Right lobe of liver (tissue), 6 donors: ENCODE measurements at regions of chr3 and their contacts with region 1.

Region 1: GRCh38 chr3:129824926-129825541 is 68.5 kb downstream of the TMCC1 start:
- DNase-seq: peak in 1 of 3 donors; percentile 53
- ATAC-seq: peak; percentile 71 to 81 (median 78)
- H3K4me3 ChIP-seq: no peak overlapping the region
- H3K27ac ChIP-seq: no peak overlapping the region
- H3K4me1 ChIP-seq: peaks cover 0 to 13% (median 6%) of the 10 kb centered on the region in 4 donors
- H3K27me3 ChIP-seq: no peaks in the 10 kb centered on the region
- CTCF ChIP-seq: peak; percentile 74 to 80 (median 76)
- POLR2A ChIP-seq: no peak

Region 2: DNA sequence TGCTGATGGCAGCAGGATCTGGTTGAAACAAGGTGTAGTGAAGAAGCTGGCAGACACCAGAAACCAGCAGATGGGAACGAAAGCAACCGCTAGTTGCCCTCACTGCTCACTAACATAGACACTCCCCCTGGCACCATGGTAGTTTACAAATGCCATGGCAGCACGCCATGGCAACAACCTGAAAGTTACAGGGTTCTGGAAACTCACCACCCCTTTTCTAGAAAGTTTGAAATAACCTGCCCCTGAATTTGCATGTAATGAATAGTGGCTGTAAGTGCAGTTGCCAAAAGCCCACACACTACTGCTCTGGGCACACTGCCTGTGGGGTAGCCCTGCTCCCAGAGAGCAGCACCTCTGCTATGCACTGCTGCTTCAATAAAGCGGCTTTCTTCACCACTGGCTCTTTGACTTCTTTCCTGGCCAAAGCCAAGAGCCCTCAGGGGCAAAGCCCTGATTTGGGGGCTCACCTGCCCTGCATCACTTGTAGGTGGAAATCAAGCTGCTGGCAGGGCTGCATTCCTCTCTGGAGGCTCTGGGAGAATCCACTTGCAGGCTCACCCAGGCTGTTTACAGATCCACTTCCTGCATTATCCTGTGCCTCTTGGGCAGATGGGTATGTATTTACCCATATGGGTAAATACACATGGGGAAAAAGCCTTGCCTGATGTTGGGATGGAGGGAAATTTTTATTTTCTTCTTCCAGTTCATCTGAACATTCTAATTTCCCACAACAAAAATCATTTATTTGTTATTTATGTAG is 766.4 kb before region 1 on chr3:
- intact Hi-C with region 1: no loop called
- DNase-seq: peak; percentile 67 to 80 (median 78)
- ATAC-seq: peak; percentile 81 to 87 (median 84)
- H3K4me3 ChIP-seq: no peak overlapping the region
- H3K27ac ChIP-seq: peak overlapping the region in 2 of 3 donors; percentile 58 to 68
- H3K4me1 ChIP-seq: peaks cover 0 to 10% (median 3%) of the 10 kb centered on the region in 4 donors
- H3K27me3 ChIP-seq: no peaks in the 10 kb centered on the region
- CTCF ChIP-seq: peak in 2 of 4 donors; percentile 22 to 25
- POLR2A ChIP-seq: no peak

Region 3: DNA sequence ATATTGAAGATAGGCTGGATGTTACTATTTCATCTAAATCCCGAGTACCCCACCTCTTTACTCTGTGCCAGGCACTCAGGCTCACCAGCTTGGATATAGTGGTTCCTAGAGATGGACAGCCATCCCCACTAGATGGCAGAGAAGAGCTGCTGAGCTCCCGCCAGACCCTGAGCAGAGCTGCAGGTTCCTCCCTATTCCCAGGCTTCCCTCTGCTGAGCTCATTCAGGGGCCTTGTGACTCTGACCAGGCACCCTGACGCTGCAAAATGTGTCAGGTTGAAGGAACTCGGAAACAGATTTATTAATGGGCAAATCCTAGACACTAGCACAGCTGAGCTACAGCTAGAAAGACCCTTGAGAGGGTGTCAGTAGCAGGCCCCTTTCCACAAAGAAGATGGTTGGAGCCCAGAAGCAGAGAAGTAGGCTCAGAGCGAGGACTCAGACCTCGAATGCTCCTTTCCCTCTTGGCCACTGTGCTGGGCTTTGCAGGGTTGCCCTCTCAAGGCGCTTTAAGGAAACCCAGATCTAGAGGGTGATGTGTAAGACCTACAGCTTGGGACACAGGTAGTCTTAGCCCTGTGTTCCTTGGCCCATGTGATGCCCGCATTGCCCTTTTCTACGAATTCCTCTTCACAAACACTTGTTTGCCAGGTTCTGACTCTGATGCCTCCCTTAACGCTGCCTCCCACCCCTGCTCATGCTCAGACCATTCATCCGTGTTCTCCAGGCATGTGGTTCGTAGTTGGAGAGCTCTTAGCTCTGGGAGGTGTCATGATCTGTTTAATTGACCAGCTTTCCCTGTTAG is 334.6 kb before region 1 on chr3:
- intact Hi-C with region 1: loop called in 1 of 2 experiments (anchors 10 kb)
- DNase-seq: peak; percentile 82 to 83 (median 83)
- ATAC-seq: peak; percentile 91 to 94 (median 93)
- H3K4me3 ChIP-seq: no peak overlapping the region
- H3K27ac ChIP-seq: peak overlapping the region; percentile 42 to 67 (median 54)
- H3K4me1 ChIP-seq: peaks cover 0 to 22% (median 4%) of the 10 kb centered on the region in 4 donors
- H3K27me3 ChIP-seq: no peaks in the 10 kb centered on the region
- CTCF ChIP-seq: peak; percentile 89 to 93 (median 91)
- POLR2A ChIP-seq: no peak

Region 4: GRCh38 chr3:129633751-129634392 is 191.2 kb before region 1 on chr3:
- intact Hi-C with region 1: loop called in 1 of 2 experiments (anchors 10 kb)
- DNase-seq: no peak
- ATAC-seq: no peak
- H3K4me3 ChIP-seq: no peak overlapping the region
- H3K27ac ChIP-seq: no peak overlapping the region
- H3K4me1 ChIP-seq: no peaks in the 10 kb centered on the region
- H3K27me3 ChIP-seq: no peaks in the 10 kb centered on the region
- CTCF ChIP-seq: no peak
- POLR2A ChIP-seq: no peak

Region 5: GRCh38 chr3:129645290-129645689 is 179.7 kb before region 1 on chr3:
- intact Hi-C with region 1: loop called in 1 of 2 experiments (anchors 5 kb)
- DNase-seq: no peak
- ATAC-seq: peak in 1 of 4 donors; percentile 25
- H3K4me3 ChIP-seq: no peak overlapping the region
- H3K27ac ChIP-seq: no peak overlapping the region
- H3K4me1 ChIP-seq: no peaks in the 10 kb centered on the region
- H3K27me3 ChIP-seq: no peaks in the 10 kb centered on the region
- CTCF ChIP-seq: no peak
- POLR2A ChIP-seq: no peak

Region 6: DNA sequence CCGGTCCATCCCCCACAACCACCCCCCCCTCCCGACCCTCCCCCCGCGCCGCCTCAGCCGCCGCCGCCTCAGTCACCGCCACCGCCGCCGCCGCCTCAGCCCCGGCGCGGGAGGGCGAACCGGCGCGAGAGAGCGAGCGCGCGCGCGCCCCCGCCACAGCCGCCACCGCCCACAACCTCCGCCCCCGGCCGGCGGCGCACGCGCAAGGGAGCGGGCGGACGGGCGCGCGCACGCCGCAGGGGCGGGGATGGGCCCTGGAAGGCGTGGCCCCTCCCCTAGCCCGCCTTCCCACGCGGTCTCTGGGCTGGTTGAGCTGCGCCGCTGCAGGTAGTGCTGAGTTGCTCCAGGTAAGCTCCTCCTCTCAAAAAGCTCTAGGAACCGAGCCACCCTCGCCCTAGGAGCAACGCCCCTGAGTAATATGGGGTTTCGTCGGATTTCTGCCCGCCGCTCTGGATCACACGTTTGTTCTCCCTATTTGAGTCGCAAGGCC is 68.6 kb after region 1 on chr3 and contains the start of gene TMCC1:
- intact Hi-C with region 1: no loop called
- DNase-seq: peak; percentile 92 to 94 (median 93)
- ATAC-seq: peak; percentile 95 to 98 (median 96)
- H3K4me3 ChIP-seq: peak within 1 kb of the TSS; percentile 85 to 89 (median 88)
- H3K27ac ChIP-seq: peak within 1 kb of the TSS; percentile 81 to 93 (median 81)
- H3K4me1 ChIP-seq: peaks cover 0 to 18% (median 3%) of the 10 kb centered on the region in 4 donors
- H3K27me3 ChIP-seq: no peaks in the 10 kb centered on the region
- CTCF ChIP-seq: no peak
- POLR2A ChIP-seq: no peak
- total RNA-seq, gene TMCC1: 21.7 to 124 (median 25.2) TPM

Region 7: DNA sequence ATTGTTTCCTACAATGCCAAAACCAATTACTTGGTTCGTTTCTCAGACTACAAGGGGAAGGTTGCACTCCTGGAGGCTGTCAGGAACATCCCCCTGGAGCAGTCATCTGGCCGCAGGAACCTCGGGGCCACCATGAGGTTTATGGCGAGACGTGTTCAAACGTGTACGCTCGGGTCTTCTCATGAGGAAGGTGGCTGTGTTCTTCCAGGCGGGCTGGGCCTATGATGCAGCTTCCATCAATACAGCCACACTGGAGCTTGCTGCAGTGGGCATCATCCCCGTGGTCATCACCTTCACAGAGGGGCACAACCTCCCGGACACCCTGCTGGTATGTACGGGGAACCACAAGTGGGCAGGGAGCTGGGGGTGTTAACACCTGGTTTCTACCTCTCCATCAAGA is 425.9 kb after region 1 on chr3:
- intact Hi-C with region 1: no loop called
- DNase-seq: no peak
- ATAC-seq: no peak
- H3K4me3 ChIP-seq: no peak overlapping the region
- H3K27ac ChIP-seq: no peak overlapping the region
- H3K4me1 ChIP-seq: no peaks in the 10 kb centered on the region
- H3K27me3 ChIP-seq: no peaks in the 10 kb centered on the region
- CTCF ChIP-seq: no peak
- POLR2A ChIP-seq: no peak